SK-N-SH (cell line): ENCODE measurements at regions of chr7 and their contacts with region 1.

Region 1: DNA sequence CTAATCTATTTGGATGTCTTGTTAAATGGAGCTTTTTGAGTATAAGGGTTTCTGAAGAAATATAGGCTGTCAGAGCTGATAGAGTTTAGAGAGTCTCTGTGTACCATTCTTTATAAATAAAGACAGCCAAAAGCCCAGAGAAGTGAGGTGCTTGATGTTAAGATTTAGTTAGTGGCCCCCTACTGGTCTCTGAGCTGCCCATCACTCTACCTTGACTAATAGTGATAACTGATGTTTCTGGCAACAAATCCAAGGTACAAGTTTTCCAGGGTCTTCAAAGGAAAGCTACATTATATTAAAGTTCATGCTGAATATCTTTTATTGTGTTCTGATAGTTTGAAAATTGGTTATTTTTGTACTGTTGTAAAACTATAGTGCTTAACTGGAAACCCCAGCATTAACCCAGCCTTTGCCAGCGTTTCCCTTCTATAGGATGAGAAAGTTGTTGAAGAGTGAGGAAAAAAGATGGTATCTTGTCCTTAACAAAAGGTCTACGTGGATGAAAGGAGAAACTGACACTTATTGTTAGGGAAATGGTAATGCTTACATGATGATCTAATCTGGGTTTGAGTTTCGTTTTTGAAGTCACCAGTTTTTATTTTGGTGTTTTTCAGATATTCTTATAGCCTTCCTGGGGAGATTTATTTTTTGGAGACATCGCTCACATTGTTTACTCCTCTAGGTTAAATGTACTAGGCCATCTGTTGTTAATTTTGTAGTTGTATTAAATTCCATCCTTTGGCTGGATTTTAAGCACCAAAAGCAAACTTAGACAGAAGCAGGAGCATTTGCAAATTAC is 79.0 kb downstream of the AUTS2 start:
- DNase-seq: no peak
- H3K4me3 ChIP-seq: peak overlapping the region in 1 of 2 experiments; percentile 7; a peak in 2 of 4 replicates
- H3K27ac ChIP-seq: peak overlapping the region; percentile 63 to 94; a peak in 3 of 4 replicates
- H3K4me1 ChIP-seq: peaks cover 7 to 43% of the 10 kb centered on the region in 2 experiments
- H3K27me3 ChIP-seq: no peaks in the 10 kb centered on the region
- CTCF ChIP-seq: peak; percentile 69
- EP300 ChIP-seq: no peak
- RAD21 ChIP-seq: peak; percentile 60

Region 2: DNA sequence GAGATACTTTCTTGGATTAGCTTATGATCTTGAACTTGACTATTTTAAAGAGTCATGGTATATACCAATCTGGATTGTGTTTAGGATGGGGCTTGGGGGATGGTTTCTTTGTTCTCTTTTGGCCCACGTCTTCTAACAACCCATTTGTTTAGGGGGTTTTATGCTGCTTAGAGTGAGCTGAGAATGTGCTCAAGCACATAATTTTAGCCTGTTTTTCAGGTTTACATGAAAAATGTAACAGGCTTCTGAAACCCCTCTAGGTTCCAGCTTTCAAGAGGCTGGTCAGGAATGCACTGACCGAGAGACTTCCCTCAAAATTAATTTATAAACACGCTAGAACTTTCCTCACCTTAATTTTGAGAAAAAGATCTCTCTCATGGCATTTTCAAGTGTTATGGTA is 15.4 kb after region 1 on chr7:
- CTCF ChIA-PET with region 1: interaction called, 12 read pairs
- POLR2A ChIA-PET with region 1: no interaction called
- DNase-seq: no peak
- H3K4me3 ChIP-seq: no peak overlapping the region
- H3K27ac ChIP-seq: no peak overlapping the region
- H3K4me1 ChIP-seq: peaks cover 0 to 23% of the 10 kb centered on the region in 2 experiments; a peak in 2 of 4 replicates
- H3K27me3 ChIP-seq: no peaks in the 10 kb centered on the region
- CTCF ChIP-seq: no peak
- EP300 ChIP-seq: no peak
- RAD21 ChIP-seq: no peak

Region 3: GRCh38 chr7:69982197-69982596 is 304.9 kb after region 1 on chr7:
- CTCF ChIA-PET with region 1: no interaction called
- POLR2A ChIA-PET with region 1: no interaction called
- DNase-seq: no peak
- H3K4me3 ChIP-seq: no peak overlapping the region
- H3K27ac ChIP-seq: peak overlapping the region in 1 of 2 experiments; percentile 14; a peak in 1 of 4 replicates
- H3K4me1 ChIP-seq: peaks cover 0 to 7% of the 10 kb centered on the region in 2 experiments; a peak in 2 of 4 replicates
- H3K27me3 ChIP-seq: no peaks in the 10 kb centered on the region
- CTCF ChIP-seq: no peak
- EP300 ChIP-seq: no peak
- RAD21 ChIP-seq: no peak